Gastrocnemius medialis (tissue), 4 donors: ENCODE measurements at regions of chr7 and their contacts with region 1.

Region 1: GRCh38 chr7:22110227-22110839 is 164.6 kb upstream of the CDCA7L start:
- DNase-seq: peak; percentile 41 to 42
- ATAC-seq: peak; percentile 64 to 74
- H3K4me3 ChIP-seq: no peak overlapping the region
- H3K27ac ChIP-seq: no peak overlapping the region
- H3K4me1 ChIP-seq: no peaks in the 10 kb centered on the region
- H3K27me3 ChIP-seq: no peaks in the 10 kb centered on the region
- CTCF ChIP-seq: peak; percentile 79 to 88 (median 83)
- POLR2A ChIP-seq: no peak

Region 2: GRCh38 chr7:22008087-22008486 is 102.2 kb before region 1 on chr7:
- in situ Hi-C with region 1: no loop called
- intact Hi-C with region 1: no loop called
- DNase-seq: no peak
- ATAC-seq: no peak
- H3K4me3 ChIP-seq: no peak overlapping the region
- H3K27ac ChIP-seq: no peak overlapping the region
- H3K4me1 ChIP-seq: no peaks in the 10 kb centered on the region
- H3K27me3 ChIP-seq: no peaks in the 10 kb centered on the region
- CTCF ChIP-seq: no peak
- POLR2A ChIP-seq: no peak

Region 3: DNA sequence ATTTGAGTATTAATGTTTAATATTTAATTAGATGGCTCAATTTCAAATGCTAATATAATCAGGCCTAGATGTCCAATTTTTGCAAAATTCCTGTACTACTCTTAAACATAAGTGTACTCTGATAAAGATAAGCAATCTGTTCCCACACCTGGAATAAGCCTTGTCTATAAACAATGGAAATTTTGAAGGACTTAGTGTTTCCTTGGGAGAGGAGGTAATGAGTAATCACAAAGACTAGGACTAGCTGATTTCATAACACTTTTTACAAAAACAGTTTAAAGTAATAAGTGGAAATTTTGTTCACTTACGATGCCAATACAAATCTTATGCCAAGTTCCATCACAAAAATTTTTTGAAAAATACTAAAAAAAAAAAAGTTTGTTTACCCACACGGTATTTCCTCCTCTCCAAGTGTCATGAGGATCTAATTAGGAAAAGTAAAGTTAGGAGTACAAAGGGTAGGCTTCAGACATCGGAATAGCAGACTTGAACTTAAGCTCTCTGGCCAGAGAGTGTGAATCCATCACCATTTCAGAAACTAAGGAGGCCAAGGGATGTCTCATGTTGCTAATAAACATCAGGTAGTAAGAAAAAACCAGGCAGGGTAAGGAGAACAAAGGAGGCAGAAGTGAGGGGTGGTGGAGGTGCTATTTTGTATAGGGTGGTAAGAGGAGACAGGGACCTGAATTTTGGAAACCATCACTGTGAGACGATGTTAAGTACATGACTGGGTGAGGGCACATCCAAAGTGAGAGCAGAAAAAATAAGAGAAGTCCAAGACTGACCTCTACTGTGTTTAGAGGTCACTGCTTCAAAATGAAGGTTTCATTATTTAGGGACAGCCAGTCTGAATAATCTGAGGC is 185.3 kb after region 1 on chr7:
- in situ Hi-C with region 1: loop called in 1 of 4 experiments (anchors 25 kb)
- intact Hi-C with region 1: loop called (anchors 10 kb)
- DNase-seq: no peak
- ATAC-seq: peak; percentile 33 to 42
- H3K4me3 ChIP-seq: no peak overlapping the region
- H3K27ac ChIP-seq: peak overlapping the region in 2 of 4 donors; percentile 2 to 22
- H3K4me1 ChIP-seq: no peaks in the 10 kb centered on the region
- H3K27me3 ChIP-seq: no peaks in the 10 kb centered on the region
- CTCF ChIP-seq: no peak
- POLR2A ChIP-seq: no peak

Region 4: DNA sequence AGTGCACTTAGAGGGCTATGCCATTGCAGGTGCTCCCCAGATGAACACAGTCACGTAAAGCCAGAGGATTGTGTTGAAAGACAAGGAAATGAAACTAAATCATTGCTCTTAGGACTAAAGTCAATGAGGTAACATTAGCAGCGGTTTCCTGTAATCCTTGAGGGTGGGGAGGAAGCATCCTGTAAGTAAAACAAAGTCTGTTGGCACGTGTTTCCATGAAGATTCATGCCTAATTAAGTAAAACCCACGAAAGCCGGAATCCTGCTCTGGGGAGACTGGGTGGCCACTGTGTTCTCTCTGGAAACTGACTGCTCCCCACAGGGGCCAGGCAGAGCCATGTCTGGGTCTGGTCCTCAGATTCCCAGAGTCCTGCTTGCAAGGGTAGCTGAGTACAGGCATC is 371.4 kb after region 1 on chr7:
- in situ Hi-C with region 1: loop called (anchors 5 kb)
- intact Hi-C with region 1: no loop called
- DNase-seq: no peak
- ATAC-seq: peak; percentile 39 to 61
- H3K4me3 ChIP-seq: no peak overlapping the region
- H3K27ac ChIP-seq: no peak overlapping the region
- H3K4me1 ChIP-seq: no peaks in the 10 kb centered on the region
- H3K27me3 ChIP-seq: no peaks in the 10 kb centered on the region
- CTCF ChIP-seq: no peak
- POLR2A ChIP-seq: no peak

Region 5: GRCh38 chr7:22488643-22489462 is 378.5 kb after region 1 on chr7:
- in situ Hi-C with region 1: loop called (anchors 5 kb)
- intact Hi-C with region 1: loop called (anchors 1 kb)
- DNase-seq: peak; percentile 25 to 44
- ATAC-seq: peak; percentile 66 to 69
- H3K4me3 ChIP-seq: no peak overlapping the region
- H3K27ac ChIP-seq: no peak overlapping the region
- H3K4me1 ChIP-seq: no peaks in the 10 kb centered on the region
- H3K27me3 ChIP-seq: no peaks in the 10 kb centered on the region
- CTCF ChIP-seq: peak; percentile 84 to 93 (median 89)
- POLR2A ChIP-seq: no peak